PC-9 (cell line): ENCODE measurements at regions of chr20 and their contacts with region 1.

Region 1: GRCh38 chr20:62623488-62624324 is 18.6 kb upstream of the SLCO4A1 start:
- DNase-seq: peak; percentile 98 to 99
- H3K4me3 ChIP-seq: peak overlapping the region; percentile 80
- H3K27ac ChIP-seq: peak overlapping the region; percentile 99
- H3K4me1 ChIP-seq: peaks cover 80% of the 10 kb centered on the region
- H3K27me3 ChIP-seq: no peaks in the 10 kb centered on the region
- CTCF ChIP-seq: no peak

Region 2: GRCh38 chr20:62357187-62357667 is 266.5 kb before region 1 on chr20:
- CTCF ChIA-PET with region 1: no interaction called
- POLR2A ChIA-PET with region 1: no interaction called
- intact Hi-C with region 1: loop called (anchors 5 kb)
- DNase-seq: peak; percentile 74 to 96
- H3K4me3 ChIP-seq: peak overlapping the region; percentile 55
- H3K27ac ChIP-seq: peak overlapping the region; percentile 86
- H3K4me1 ChIP-seq: peaks cover 92% of the 10 kb centered on the region
- H3K27me3 ChIP-seq: no peaks in the 10 kb centered on the region
- CTCF ChIP-seq: no peak

Region 3: GRCh38 chr20:62427172-62428001 is 196.3 kb before region 1 on chr20 and contains the start of gene RBBP8NL:
- CTCF ChIA-PET with region 1: interaction called, 3 read pairs
- POLR2A ChIA-PET with region 1: no interaction called
- intact Hi-C with region 1: loop called (anchors 5 kb)
- DNase-seq: peak; percentile 97 to 98
- H3K4me3 ChIP-seq: peak within 1 kb of the TSS; percentile 64
- H3K27ac ChIP-seq: peak within 1 kb of the TSS; percentile 45
- H3K4me1 ChIP-seq: peaks cover 38% of the 10 kb centered on the region
- H3K27me3 ChIP-seq: no peaks in the 10 kb centered on the region
- CTCF ChIP-seq: peak; percentile 60
- total RNA-seq, gene RBBP8NL: 8.7 and 14.0 TPM in 2 replicates

Region 4: DNA sequence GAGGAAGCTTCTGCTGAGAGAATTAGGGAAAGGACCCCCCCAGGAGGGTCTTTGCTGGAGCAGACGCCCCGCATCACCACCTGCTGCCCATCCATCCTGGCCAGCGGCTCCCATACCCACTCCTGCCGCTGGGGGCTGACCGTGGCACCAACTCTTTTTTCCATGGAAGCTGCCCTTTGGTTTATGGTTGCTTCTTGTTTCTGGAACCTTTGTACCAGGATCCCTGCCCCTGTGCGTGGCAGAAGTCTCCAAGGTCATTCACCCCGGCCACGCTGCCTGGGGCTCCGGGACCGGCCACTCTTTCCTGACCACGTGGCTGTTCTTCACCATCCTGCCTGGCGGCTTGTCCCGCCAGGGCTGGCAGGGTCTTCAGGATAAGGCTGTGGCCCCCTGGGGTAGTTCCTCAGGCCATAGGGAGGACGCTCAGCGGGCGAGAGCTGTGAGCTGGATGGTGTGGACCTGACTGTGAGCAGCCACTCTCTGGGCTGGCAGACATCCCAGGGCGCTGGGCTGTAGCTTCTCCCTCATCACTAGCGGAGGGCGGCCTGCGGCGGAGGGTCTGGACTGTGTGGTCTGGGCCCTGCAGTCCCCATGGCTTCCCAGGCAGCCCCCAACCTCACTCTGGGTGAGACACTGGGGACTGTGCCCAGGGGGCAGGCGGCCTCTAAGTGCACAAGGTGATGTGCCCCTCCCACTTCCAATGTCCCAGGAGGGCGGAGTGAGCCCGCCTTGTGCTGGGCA is 173.6 kb before region 1 on chr20:
- CTCF ChIA-PET with region 1: no interaction called
- POLR2A ChIA-PET with region 1: no interaction called
- intact Hi-C with region 1: no loop called
- DNase-seq: no peak
- H3K4me3 ChIP-seq: no peak overlapping the region
- H3K27ac ChIP-seq: no peak overlapping the region
- H3K4me1 ChIP-seq: no peaks in the 10 kb centered on the region
- H3K27me3 ChIP-seq: peaks cover 89% of the 10 kb centered on the region
- CTCF ChIP-seq: peak; percentile 68

Region 5: DNA sequence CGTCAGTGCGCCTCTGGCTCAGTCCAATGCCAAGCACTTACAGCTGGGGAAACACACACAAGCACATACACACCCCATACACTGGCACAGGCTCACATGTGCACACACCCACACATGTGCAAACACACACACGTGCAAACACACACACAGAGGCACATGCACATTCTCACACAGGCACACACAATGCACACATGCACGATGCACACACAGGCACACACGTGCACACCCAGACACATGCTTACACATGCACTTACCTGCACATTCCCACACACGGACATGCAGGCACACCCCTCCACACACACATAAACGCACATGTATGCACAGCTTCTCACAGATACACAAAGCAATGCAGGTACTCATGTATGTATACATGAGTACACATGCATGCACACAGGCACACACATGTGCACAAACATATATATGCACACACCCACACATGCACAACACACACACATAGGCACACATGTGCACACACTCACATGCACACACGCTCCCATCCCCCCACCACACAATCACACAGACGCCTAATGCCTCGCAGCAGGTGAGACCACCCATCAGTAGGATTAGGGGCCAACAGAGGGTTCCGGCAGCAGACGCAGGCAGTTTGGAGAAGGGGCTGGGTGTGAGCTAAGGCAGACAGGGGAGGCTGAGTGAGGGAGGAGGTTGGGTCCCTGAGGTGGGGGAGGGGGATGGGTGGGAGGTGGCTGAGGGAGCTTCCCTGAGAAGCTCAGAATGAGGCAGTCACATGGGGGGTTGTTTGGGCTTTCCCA is 52.6 kb before region 1 on chr20:
- CTCF ChIA-PET with region 1: no interaction called
- POLR2A ChIA-PET with region 1: no interaction called
- intact Hi-C with region 1: no loop called
- DNase-seq: no peak
- H3K4me3 ChIP-seq: no peak overlapping the region
- H3K27ac ChIP-seq: no peak overlapping the region
- H3K4me1 ChIP-seq: no peaks in the 10 kb centered on the region
- H3K27me3 ChIP-seq: peaks cover 94% of the 10 kb centered on the region
- CTCF ChIP-seq: no peak

Region 6: DNA sequence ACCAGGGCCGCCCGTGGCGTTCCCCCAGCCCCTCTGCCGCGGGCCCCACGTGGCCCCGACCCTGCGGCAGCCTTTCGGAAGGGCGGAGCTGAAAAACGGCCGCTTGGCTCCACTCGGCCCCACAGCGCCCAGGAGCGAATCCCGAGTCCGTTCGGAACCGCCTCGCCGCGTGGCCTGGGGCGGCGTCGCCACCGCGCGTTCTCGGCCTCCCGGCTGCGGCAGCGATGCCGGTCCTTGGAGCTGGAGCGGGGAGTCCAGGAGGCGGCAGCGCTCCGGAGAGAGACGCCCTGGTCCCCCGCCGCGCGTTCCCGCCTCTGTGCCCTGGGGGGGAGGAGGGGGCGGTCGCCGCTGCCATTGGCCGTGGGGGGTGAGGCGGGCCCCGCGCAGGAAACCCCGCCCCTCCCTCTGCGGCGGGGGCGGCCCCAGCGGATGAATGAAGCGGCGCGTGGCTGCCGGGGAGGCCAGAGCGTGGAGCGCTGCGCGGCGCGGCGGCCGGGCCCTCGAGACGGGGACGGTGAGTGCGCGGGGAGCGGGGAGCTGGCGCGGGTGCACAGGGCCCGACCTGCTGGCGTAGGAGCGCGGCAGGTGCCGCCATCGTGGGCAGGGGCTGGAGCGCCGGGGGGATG is 18.4 kb after region 1 on chr20 and contains the start of gene SLCO4A1:
- CTCF ChIA-PET with region 1: interaction called, 5 read pairs
- POLR2A ChIA-PET with region 1: interaction called, 10 read pairs
- intact Hi-C with region 1: loop called (anchors 1 kb)
- DNase-seq: peak; percentile 68 to 91
- H3K4me3 ChIP-seq: peak within 1 kb of the TSS; percentile 97
- H3K27ac ChIP-seq: peak within 1 kb of the TSS; percentile 43
- H3K4me1 ChIP-seq: peaks cover 45% of the 10 kb centered on the region
- H3K27me3 ChIP-seq: no peaks in the 10 kb centered on the region
- CTCF ChIP-seq: no peak
- total RNA-seq, gene SLCO4A1: 14.1 and 19.3 TPM in 2 replicates

Region 7: GRCh38 chr20:62668441-62669027 is 44.8 kb after region 1 on chr20:
- CTCF ChIA-PET with region 1: interaction called, 3 read pairs
- POLR2A ChIA-PET with region 1: no interaction called
- intact Hi-C with region 1: loop called (anchors 2 kb)
- DNase-seq: peak; percentile 53 to 76
- H3K4me3 ChIP-seq: no peak overlapping the region
- H3K27ac ChIP-seq: no peak overlapping the region
- H3K4me1 ChIP-seq: no peaks in the 10 kb centered on the region
- H3K27me3 ChIP-seq: no peaks in the 10 kb centered on the region
- CTCF ChIP-seq: peak; percentile 91

Region 8: GRCh38 chr20:62907384-62908317 is 283.9 kb after region 1 on chr20:
- CTCF ChIA-PET with region 1: no interaction called
- POLR2A ChIA-PET with region 1: no interaction called
- intact Hi-C with region 1: no loop called
- DNase-seq: no peak
- H3K4me3 ChIP-seq: no peak overlapping the region
- H3K27ac ChIP-seq: no peak overlapping the region
- H3K4me1 ChIP-seq: no peaks in the 10 kb centered on the region
- H3K27me3 ChIP-seq: no peaks in the 10 kb centered on the region
- CTCF ChIP-seq: peak; percentile 70

Region 9: GRCh38 chr20:62926239-62927104 is 302.8 kb after region 1 on chr20 and contains the start of gene DIDO1:
- CTCF ChIA-PET with region 1: no interaction called
- POLR2A ChIA-PET with region 1: no interaction called
- intact Hi-C with region 1: loop called (anchors 5 kb)
- DNase-seq: peak; percentile 73 to 91
- H3K4me3 ChIP-seq: peak within 1 kb of the TSS; percentile 75
- H3K27ac ChIP-seq: peak within 1 kb of the TSS; percentile 81
- H3K4me1 ChIP-seq: peaks cover 35% of the 10 kb centered on the region
- H3K27me3 ChIP-seq: no peaks in the 10 kb centered on the region
- CTCF ChIP-seq: peak; percentile 71; the same call in 1 of the 2 replicates
- total RNA-seq, gene DIDO1: 56.4 and 61.4 TPM in 2 replicates